ENCODE measurements at regions of chr1 and their contacts with region 1.

Region 1: GRCh38 chr1:32773018-32773763 is 44.0 kb downstream of the YARS1 start:
- DNase-seq: peak; percentile 88
- ATAC-seq: peak; percentile 84
- H3K4me3 Mint-ChIP-seq: no peak overlapping the region
- H3K27ac Mint-ChIP-seq: no peak overlapping the region
- H3K4me1 Mint-ChIP-seq: peaks cover 16% of the 10 kb centered on the region
- H3K27me3 Mint-ChIP-seq: no peaks in the 10 kb centered on the region

Region 2: GRCh38 chr1:32580348-32581017 is 192.7 kb before region 1 on chr1:
- CTCF ChIA-PET with region 1: no interaction called
- POLR2A ChIA-PET with region 1: interaction called, 13 read pairs
- intact Hi-C with region 1: no loop called
- DNase-seq: no peak
- ATAC-seq: peak; percentile 58
- H3K4me3 Mint-ChIP-seq: no peak overlapping the region
- H3K27ac Mint-ChIP-seq: no peak overlapping the region
- H3K4me1 Mint-ChIP-seq: no peaks in the 10 kb centered on the region
- H3K27me3 Mint-ChIP-seq: peaks cover 2% of the 10 kb centered on the region

Region 3: GRCh38 chr1:32709075-32709474 is 64.1 kb before region 1 on chr1:
- CTCF ChIA-PET with region 1: interaction called, 156 read pairs
- POLR2A ChIA-PET with region 1: interaction called, 9 read pairs
- intact Hi-C with region 1: loop called (anchors 1 kb)
- DNase-seq: no peak
- ATAC-seq: no peak
- H3K4me3 Mint-ChIP-seq: no peak overlapping the region
- H3K27ac Mint-ChIP-seq: no peak overlapping the region
- H3K4me1 Mint-ChIP-seq: peaks cover 4% of the 10 kb centered on the region
- H3K27me3 Mint-ChIP-seq: peaks cover 11% of the 10 kb centered on the region

Region 4: GRCh38 chr1:32761253-32761880 is 11.8 kb before region 1 on chr1:
- CTCF ChIA-PET with region 1: interaction called, 25 read pairs
- POLR2A ChIA-PET with region 1: no interaction called
- intact Hi-C with region 1: no loop called
- DNase-seq: peak; percentile 81
- ATAC-seq: peak; percentile 80
- H3K4me3 Mint-ChIP-seq: no peak overlapping the region
- H3K27ac Mint-ChIP-seq: peak overlapping the region; percentile 45
- H3K4me1 Mint-ChIP-seq: peaks cover 26% of the 10 kb centered on the region
- H3K27me3 Mint-ChIP-seq: no peaks in the 10 kb centered on the region

Region 5: DNA sequence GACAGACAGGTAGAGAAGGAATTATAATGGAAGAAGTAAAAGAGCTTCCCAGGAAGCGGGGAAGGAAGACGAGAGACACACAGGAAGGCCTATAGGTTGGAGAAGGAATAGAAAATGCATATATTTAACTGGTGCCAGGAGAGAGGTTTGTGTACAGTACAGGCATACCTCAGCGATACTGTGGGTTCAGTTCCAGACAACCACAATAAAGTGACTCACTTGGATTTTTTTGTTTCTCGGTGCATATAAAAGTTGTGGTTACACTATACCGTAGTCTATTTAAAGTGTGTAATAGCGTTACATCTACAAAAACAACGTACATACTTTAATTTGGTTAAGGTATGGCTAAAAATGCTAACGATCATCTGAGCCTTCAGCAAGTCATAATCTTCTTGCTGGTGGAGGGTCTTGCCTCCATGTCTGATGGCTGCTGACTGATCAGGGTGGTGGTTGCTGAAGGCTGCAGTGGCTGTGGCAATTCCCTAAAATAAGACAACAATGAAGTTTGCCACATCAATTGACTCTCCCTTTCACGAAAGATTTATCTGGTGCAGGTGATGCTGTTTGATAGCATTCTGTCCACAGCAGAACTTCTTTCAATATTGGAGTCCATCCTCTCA is 28.0 kb after region 1 on chr1:
- CTCF ChIA-PET with region 1: interaction called, 4 read pairs
- POLR2A ChIA-PET with region 1: interaction called, 11 read pairs
- intact Hi-C with region 1: no loop called
- DNase-seq: peak; percentile 59
- ATAC-seq: peak; percentile 63
- H3K4me3 Mint-ChIP-seq: peak overlapping the region; percentile 49
- H3K27ac Mint-ChIP-seq: peak overlapping the region; percentile 69
- H3K4me1 Mint-ChIP-seq: peaks cover 56% of the 10 kb centered on the region
- H3K27me3 Mint-ChIP-seq: no peaks in the 10 kb centered on the region

Region 6: GRCh38 chr1:33050221-33051076 is 277.3 kb after region 1 on chr1:
- CTCF ChIA-PET with region 1: no interaction called
- POLR2A ChIA-PET with region 1: no interaction called
- intact Hi-C with region 1: no loop called
- DNase-seq: no peak
- ATAC-seq: no peak
- H3K4me3 Mint-ChIP-seq: no peak overlapping the region
- H3K27ac Mint-ChIP-seq: no peak overlapping the region
- H3K4me1 Mint-ChIP-seq: peaks cover 2% of the 10 kb centered on the region
- H3K27me3 Mint-ChIP-seq: peaks cover 5% of the 10 kb centered on the region